PC-3 (cell line): ENCODE measurements at regions of chr1 and their contacts with region 1.

Region 1: DNA sequence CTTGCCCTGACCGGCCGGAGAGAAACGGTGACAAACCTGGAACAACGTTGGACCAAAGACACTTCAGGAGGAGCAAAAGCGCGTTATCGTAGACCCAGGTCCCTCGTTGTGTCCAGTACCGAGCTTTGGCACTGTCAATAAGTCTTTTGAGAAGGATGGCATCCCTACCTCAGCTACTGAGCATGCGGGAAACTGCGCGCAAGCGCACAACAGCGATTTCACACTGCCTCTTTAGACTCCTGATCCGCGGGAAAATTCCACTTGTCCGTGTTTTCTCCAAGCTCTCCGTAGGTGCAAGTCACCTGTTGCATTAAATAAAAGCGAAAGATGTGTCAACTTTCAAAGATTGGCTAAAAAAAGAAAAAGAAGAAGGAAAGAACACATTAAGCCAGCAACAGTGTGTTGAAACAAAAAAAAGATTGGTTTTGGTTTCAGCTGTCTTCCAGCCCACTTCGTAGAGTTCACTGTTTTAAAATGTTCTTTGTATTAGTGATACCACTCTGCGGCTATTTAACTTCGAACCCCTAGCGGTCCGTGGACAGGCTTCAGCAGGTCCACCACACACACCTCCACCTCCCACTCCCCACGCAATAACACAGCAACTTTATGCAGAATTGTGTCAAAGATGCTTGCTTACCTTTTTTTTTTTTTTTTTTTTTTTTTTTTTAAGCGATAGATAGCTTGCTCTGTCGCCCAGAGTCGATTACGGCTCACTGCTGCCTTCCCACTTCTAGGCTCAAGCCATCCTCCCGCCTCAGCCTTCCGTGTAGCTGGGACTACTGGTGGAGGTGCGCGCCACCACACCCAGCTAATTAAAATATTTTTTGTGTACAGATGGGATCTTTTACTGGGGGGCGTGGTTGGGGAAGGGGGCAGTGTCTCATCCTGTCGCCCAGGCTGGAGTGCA is at the start of gene BPNT1:
- DNase-seq: peak; percentile 100
- ATAC-seq: peak; percentile 74
- H3K4me3 ChIP-seq: peak within 1 kb of the TSS; percentile 92
- H3K27ac ChIP-seq: 0 out of 2 replicates have a peak within 1 kb of the TSS, but pooled peaks have one; percentile 3
- H3K4me1 ChIP-seq: peaks cover 9% of the 10 kb centered on the region; the same call in 1 of the 2 replicates
- H3K27me3 ChIP-seq: no peaks in the 10 kb centered on the region
- CTCF ChIP-seq: no peak; the same call in 1 of the 2 replicates
- total RNA-seq, gene BPNT1: 40.7 and 49.7 TPM in 2 replicates

Region 2: DNA sequence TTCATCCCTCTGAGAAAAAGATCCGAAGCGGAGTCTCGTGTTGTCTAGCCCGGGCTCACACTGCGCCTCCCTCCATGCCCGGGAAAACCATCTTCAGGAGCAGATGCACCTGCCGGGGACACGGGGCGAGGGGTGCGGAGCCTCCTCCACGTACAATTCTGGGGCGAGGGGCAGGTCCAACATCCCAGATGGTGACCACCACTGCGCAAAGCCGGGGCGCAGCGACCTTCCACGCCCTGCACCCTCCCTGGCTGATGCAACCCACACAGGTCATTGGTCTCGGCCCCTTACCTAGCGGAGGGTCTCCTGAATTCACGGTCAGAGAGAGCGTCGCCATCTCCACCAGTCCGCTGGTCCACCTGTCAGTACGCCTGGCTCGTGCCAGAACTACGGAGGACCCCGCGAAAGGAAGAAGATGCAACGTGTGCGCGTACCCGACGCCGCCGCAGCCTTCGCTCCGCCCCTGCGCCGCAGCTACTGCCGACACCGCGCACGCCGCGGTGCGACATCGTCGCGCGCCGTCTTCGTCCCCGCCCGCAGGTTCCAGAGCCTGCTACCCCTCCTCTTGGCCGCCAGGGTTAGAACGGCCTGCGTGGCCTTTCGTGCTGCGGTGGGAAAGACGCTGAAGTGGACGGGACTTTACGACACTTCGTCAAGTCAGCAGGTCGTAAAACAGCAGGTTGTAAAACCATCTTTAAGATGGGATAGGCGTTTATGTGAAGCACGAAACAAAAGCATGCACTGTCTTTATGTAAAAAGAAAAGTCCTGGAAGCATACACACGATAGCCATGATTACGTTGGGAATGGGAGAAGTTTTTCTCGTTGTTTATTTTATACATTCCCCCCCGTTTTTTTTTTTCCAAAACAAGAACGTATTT is 43.6 kb before region 1 on chr1 and contains the start of gene EPRS1:
- CTCF ChIA-PET with region 1: no interaction called
- POLR2A ChIA-PET with region 1: no interaction called
- intact Hi-C with region 1: loop called (anchors 1 kb)
- DNase-seq: peak; percentile 100
- ATAC-seq: peak; percentile 96
- H3K4me3 ChIP-seq: peak within 1 kb of the TSS; percentile 81
- H3K27ac ChIP-seq: peak within 1 kb of the TSS; percentile 62
- H3K4me1 ChIP-seq: peaks cover 20% of the 10 kb centered on the region
- H3K27me3 ChIP-seq: no peaks in the 10 kb centered on the region
- CTCF ChIP-seq: peak; percentile 58
- total RNA-seq, gene EPRS1: 186 and 226 TPM in 2 replicates

Region 3: DNA sequence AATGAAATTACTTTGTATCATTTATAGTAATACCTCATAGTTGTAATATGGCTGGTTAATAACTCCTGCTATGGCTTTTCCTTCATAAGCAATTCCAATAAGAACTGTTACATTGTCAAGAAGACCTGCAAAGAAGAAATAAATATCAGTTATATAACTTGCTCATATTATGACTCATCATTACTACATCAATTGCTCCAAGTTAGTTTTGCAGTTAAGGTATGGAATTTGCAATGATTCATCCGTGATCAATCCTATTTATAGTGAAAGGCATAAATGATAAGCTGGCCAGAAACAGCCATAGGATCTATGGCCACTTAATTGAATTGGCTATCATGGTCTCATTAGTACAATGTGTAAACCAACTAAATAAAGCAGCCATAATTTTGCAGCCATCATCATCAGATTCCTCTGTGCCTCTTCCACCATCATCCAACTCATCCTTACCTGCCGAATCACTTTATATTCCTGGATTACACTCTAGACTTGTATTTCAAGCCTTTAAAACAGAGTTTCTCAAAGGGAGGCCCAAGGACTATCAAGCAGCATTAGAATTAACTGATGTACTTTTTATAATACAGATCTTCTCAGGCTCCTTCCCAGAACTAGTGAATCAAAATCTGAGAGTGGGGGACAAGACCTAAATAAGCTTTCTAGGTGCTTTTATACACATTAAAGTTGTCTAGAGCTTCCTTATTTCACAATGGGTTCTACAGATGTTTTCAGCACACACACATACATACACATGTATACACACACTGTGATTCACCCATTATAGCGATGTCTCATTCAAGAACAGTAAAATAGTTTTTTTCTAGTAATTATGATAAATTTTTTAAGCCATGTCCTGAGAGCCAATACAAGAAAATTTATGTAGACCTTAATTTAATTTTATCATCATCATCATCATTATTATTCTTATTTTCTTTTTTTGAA is 22.4 kb before region 1 on chr1:
- CTCF ChIA-PET with region 1: no interaction called
- POLR2A ChIA-PET with region 1: interaction called, 7 read pairs
- intact Hi-C with region 1: loop called (anchors 1 kb)
- DNase-seq: peak; percentile 96
- ATAC-seq: peak; percentile 91
- H3K4me3 ChIP-seq: no peak overlapping the region
- H3K27ac ChIP-seq: peak overlapping the region; percentile 55
- H3K4me1 ChIP-seq: peaks cover 15% of the 10 kb centered on the region
- H3K27me3 ChIP-seq: no peaks in the 10 kb centered on the region
- CTCF ChIP-seq: no peak

Region 4: GRCh38 chr1:220123889-220124288 is 34.0 kb after region 1 on chr1:
- CTCF ChIA-PET with region 1: no interaction called
- POLR2A ChIA-PET with region 1: interaction called, 14 read pairs
- intact Hi-C with region 1: no loop called
- DNase-seq: peak; percentile 27
- ATAC-seq: 0 out of 2 replicates have a peak, but pooled peaks have one; percentile 35
- H3K4me3 ChIP-seq: no peak overlapping the region
- H3K27ac ChIP-seq: no peak overlapping the region
- H3K4me1 ChIP-seq: no peaks in the 10 kb centered on the region
- H3K27me3 ChIP-seq: no peaks in the 10 kb centered on the region
- CTCF ChIP-seq: peak; percentile 59

Region 5: DNA sequence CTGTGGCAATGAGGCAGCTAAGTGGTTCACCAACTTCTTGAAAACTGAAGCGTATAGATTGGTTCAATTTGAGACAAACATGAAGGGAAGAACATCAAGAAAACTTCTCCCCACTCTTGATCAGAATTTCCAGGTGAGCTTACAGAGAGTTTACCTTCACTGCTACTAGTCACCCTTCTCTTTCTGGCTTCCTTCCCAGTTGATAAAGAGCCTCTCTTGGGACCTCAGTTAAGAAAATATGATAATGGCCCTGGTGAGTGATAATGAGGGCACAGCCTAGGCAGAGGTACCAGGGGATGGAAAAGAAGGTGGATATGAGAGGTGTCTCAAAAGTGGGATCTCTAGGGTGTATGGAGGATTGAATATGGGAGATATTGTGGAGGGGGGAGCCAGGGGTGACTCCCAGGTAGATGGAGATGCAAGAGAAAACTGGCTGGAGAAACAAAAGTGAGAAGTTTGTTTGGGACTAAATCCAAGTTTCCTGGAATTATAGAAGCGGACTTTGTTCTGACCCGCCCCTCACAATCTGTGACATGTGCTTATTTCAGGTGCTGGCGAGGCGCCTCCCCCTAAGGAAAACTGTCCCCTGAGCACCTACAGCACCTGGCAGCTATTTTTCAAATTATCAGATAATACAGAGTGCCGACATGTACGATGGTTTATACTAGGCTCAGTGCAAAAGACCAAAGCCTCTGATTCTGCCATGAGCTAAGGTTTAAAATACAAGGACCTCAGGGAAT is 672.0 kb after region 1 on chr1:
- CTCF ChIA-PET with region 1: no interaction called
- POLR2A ChIA-PET with region 1: no interaction called
- intact Hi-C with region 1: no loop called
- DNase-seq: no peak
- ATAC-seq: no peak
- H3K4me3 ChIP-seq: no peak overlapping the region
- H3K27ac ChIP-seq: no peak overlapping the region
- H3K4me1 ChIP-seq: no peaks in the 10 kb centered on the region
- H3K27me3 ChIP-seq: no peaks in the 10 kb centered on the region
- CTCF ChIP-seq: no peak